Activated CD8-positive, alpha-beta T cell treated with anti-CD3 and anti-CD28 coated beads for 36 hours (primary cell): ENCODE measurements at regions of chr22 and their contacts with region 1.

Region 1: GRCh38 chr22:21001560-21002325 is at the start of gene THAP7:
- DNase-seq: peak; percentile 98
- ATAC-seq: peak; percentile 93
- H3K4me3 Mint-ChIP-seq: peak within 1 kb of the TSS; percentile 92
- H3K27ac Mint-ChIP-seq: peak within 1 kb of the TSS; percentile 96
- H3K4me1 Mint-ChIP-seq: peaks cover 15% of the 10 kb centered on the region
- H3K27me3 Mint-ChIP-seq: no peaks in the 10 kb centered on the region
- CTCF ChIP-seq: no peak
- total RNA-seq, gene THAP7: 23.7 to 23.8 TPM

Region 2: GRCh38 chr22:20989323-20990138 is 12.2 kb before region 1 on chr22:
- CTCF ChIA-PET with region 1: no interaction called
- POLR2A ChIA-PET with region 1: interaction called, 26 read pairs
- intact Hi-C with region 1: no loop called
- DNase-seq: no peak
- ATAC-seq: no peak
- H3K4me3 Mint-ChIP-seq: no peak overlapping the region
- H3K27ac Mint-ChIP-seq: no peak overlapping the region
- H3K4me1 Mint-ChIP-seq: peaks cover 2% of the 10 kb centered on the region
- H3K27me3 Mint-ChIP-seq: no peaks in the 10 kb centered on the region
- CTCF ChIP-seq: no peak

Region 3: GRCh38 chr22:21013657-21014201 is 12.0 kb after region 1 on chr22:
- CTCF ChIA-PET with region 1: interaction called, 5 read pairs
- POLR2A ChIA-PET with region 1: interaction called, 13 read pairs
- intact Hi-C with region 1: no loop called
- DNase-seq: no peak
- ATAC-seq: no peak
- H3K4me3 Mint-ChIP-seq: peak overlapping the region; percentile 73
- H3K27ac Mint-ChIP-seq: peak overlapping the region; percentile 75
- H3K4me1 Mint-ChIP-seq: peaks cover 19% of the 10 kb centered on the region
- H3K27me3 Mint-ChIP-seq: no peaks in the 10 kb centered on the region
- CTCF ChIP-seq: no peak